GM10248 (cell line): ENCODE measurements at regions of chr13 and their contacts with region 1.

Region 1: DNA sequence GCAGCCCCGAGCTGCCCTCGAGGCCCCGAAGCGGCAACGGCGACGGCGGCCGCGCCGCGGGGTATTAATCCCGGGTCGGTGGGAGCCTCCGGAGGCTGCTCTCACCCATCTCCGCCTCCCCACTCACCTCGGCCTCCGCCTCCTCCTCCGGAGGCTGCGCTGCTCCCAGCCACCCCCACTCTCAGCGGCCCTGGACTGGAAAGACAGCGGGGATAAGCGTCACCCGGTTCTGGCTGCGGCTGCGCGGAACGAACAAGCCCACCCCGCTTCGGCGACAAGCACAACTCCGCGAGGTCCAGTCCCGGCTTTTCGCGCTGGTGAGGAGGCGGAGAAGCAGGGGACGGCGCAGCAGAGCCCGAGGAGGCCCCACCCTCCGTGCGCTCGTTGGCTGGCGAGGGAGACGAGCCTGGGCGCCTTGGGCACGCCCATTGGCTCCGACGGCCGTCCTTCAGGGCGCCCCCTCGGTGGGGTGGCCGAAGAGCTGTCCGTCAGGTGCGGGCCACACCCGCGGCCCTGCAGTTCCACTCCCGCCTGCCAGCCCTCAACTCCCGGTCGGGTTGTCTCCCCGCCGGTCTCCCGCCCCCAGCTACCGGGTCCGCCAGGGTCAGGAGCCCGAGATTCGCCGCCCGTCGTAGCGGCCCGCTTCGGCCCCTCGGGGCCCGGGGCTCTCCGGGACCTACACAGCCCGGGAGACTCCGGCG is at the start of gene ZMYM5:
- DNase-seq: peak; percentile 98
- CTCF ChIP-seq: no peak

Region 2: GRCh38 chr13:19845758-19846157 is 17.7 kb before region 1 on chr13:
- CTCF ChIA-PET with region 1: interaction called, 39 read pairs
- POLR2A ChIA-PET with region 1: interaction called, 4 read pairs
- DNase-seq: no peak
- CTCF ChIP-seq: no peak

Region 3: DNA sequence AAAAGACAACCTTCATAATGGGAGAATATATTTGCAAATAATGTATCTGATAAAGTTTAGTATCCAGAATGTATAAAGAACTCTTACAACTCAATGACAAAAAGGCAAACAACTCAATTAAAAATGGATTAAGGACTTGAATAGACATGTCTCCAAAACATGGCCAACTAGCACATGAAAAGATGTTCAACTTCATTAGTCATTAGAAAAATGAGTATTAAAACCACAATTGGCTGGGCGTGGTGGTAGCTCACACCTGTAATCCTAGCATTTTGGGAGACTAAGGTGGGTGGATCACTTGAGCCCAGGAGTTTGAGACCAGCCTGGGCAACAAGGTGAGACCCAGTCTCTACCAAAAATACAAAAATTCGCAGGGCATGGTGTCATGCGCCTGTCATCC is 18.8 kb after region 1 on chr13:
- CTCF ChIA-PET with region 1: interaction called, 11 read pairs
- POLR2A ChIA-PET with region 1: no interaction called
- DNase-seq: no peak
- CTCF ChIP-seq: no peak

Region 4: DNA sequence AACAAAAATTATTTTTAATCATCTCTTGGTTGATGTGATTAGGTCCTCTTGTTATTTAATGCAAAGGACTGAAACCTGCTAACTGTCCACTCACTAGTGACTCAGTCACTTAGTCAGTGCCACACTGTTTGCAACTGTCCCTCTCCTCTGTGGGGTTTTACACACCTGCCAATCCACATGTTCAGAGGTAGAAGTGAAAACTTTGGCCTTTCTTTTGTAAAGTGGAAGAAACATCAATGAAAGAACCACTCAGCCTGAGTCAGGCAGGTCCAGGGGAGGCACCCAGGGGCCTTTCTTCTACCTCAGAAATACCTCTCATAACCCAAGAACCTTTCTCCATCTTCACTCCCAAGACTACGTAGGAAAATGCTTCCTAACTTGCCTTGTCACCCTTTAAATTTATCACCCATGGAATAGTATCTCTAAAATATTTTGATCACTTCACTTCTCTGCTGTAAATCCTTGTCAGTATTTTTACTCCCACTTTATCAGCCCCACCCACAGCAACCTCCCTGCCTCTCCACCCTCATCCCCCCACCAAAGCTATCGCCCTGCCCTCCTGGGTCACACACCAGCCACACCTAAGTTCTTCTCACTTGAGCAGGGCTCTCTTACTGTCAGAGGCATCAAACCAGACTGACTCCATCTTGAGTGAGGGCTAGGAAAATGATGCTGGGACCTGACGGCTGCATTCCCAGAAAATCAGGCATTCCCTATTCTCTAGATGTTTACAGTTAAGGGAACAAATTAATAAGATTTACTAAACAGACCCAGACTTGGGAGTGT is 939.9 kb after region 1 on chr13:
- CTCF ChIA-PET with region 1: no interaction called
- POLR2A ChIA-PET with region 1: no interaction called
- DNase-seq: no peak
- CTCF ChIP-seq: no peak